ENCODE measurements at regions of chr19 and their contacts with region 1.

Region 1: GRCh38 chr19:51338563-51339312 is 3.2 kb downstream of the VSIG10L start:
- DNase-seq: peak; percentile 60 to 82 (median 70)
- H3K4me3 ChIP-seq: peak overlapping the region; percentile 38 to 89 (median 67)
- H3K27ac ChIP-seq: peak overlapping the region in 32 of 59 donors; percentile 1 to 90 (median 56)
- H3K27me3 ChIP-seq: no peaks in the 10 kb centered on the region
- CTCF ChIP-seq: peak; percentile 56 to 93 (median 82)

Region 2: DNA sequence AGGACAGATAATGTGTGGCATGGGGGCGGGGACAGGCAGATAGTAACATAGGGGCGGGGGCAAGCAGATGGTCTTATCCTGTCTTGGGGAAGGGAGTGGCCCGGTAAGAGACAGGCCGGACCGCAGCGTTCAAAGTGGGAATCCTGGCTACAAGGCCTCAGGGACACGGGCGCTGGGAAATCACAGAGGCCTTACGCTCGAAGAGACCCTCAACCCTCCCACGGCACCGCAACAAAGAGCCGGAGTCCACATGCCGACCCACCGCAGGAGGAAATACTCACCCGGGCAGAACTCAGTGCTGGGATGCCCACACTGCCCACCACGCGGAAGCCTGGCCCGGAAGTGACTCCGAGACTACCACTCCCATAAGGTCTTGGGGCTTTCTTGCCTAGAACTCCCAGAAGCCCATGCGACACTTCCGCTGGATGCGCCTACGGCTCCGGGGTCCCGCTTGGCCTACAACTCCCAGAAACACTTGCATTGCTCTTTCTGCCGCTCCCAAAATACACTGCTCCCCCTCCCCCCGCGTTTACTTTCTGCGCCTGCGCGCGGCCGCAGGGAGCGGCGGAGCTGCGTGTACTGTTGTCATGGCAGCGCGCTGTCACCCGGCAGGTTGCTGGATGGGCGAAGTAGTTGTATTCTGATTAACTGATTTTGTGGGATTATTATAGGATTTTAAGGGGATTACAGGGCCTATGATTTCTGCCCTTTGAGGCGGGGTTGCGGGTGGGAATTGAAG is 230.5 kb before region 1 on chr19 and contains the start of gene CTU1:
- intact Hi-C with region 1: no loop called
- DNase-seq: peak; percentile 97 to 100 (median 99)
- H3K4me3 ChIP-seq: peak within 1 kb of the TSS; percentile 59 to 96 (median 84)
- H3K27ac ChIP-seq: peak within 1 kb of the TSS in 55 of 59 donors; percentile 5 to 95 (median 77)
- H3K27me3 ChIP-seq: peaks cover 0 to 4% (median 0%) of the 10 kb centered on the region in 45 donors
- CTCF ChIP-seq: peak in 41 of 56 donors; percentile 5 to 64 (median 36)
- total RNA-seq, gene CTU1: 4.6 to 14.6 (median 7.5) TPM

Region 3: DNA sequence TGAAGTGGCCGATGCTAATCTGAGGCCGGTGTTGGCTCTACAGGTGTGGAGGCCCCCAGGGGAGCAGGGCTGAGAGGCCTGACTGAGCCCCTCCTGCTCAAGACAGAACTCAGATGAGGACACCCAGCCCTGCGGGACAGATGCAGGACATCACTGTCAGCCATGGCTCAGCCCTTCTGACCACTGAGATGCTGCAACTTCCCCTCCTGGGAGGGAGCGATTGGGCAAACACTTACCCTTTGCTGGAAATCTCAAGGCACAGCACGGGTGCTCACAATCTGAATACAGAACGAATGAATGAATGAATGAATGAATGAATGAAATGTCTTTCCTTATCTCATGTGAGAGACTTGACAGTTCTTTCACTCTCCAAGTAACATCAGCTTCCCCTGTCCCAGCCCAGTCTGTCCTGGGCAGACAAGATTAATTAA is 200.2 kb before region 1 on chr19:
- intact Hi-C with region 1: no loop called
- DNase-seq: peak in 1 of 10 donors; percentile 24
- H3K4me3 ChIP-seq: no peak overlapping the region
- H3K27ac ChIP-seq: peak overlapping the region in 18 of 59 donors; percentile 6 to 80 (median 48)
- H3K27me3 ChIP-seq: peaks cover 0 to 20% (median 0%) of the 10 kb centered on the region in 45 donors
- CTCF ChIP-seq: no peak

Region 4: GRCh38 chr19:51367565-51368365 is 29.0 kb after region 1 on chr19:
- intact Hi-C with region 1: loop called (anchors 1 kb)
- DNase-seq: peak; percentile 94 to 99 (median 98)
- H3K4me3 ChIP-seq: peak overlapping the region; percentile 66 to 99 (median 86)
- H3K27ac ChIP-seq: peak overlapping the region; percentile 80 to 99 (median 94)
- H3K27me3 ChIP-seq: no peaks in the 10 kb centered on the region
- CTCF ChIP-seq: peak in 19 of 56 donors; percentile 3 to 39 (median 19)

Region 5: GRCh38 chr19:51393959-51394836 is 55.5 kb after region 1 on chr19:
- intact Hi-C with region 1: loop called in 1 of 2 experiments (anchors 2 kb)
- DNase-seq: peak; percentile 78 to 96 (median 92)
- H3K4me3 ChIP-seq: peak overlapping the region; percentile 27 to 74 (median 57)
- H3K27ac ChIP-seq: peak overlapping the region; percentile 4 to 92 (median 78)
- H3K27me3 ChIP-seq: no peaks in the 10 kb centered on the region
- CTCF ChIP-seq: peak in 45 of 56 donors; percentile 16 to 62 (median 31)

Region 6: DNA sequence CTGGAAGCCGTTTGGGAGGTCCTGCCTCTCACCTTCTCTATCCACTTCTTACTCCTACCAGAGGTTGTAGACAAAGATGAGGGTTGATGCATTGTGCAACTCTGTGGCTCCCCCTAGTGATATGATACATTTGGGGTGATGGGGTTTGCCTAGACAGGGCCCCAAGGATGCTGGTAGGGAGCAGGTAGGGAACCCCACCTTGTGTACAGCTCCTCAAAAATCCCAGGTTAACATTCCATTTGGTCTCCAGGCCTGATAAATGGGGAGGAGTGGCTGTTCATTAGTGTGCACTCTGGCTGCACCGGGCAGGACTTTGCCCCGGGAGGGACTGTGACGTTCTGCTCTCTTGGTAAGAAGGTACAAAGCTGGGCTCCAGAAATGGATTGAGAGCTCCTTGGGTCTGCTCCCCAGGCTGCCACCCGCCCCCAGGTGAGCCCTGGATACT is 100.3 kb after region 1 on chr19:
- intact Hi-C with region 1: loop called in 1 of 2 experiments (anchors 2 kb)
- DNase-seq: no peak
- H3K4me3 ChIP-seq: no peak overlapping the region
- H3K27ac ChIP-seq: no peak overlapping the region
- H3K27me3 ChIP-seq: peaks cover 0 to 68% (median 23%) of the 10 kb centered on the region in 45 donors
- CTCF ChIP-seq: peak in 37 of 56 donors; percentile 6 to 54 (median 29)